Dorsolateral prefrontal cortex (tissue), 120 donors: ENCODE measurements at regions of chr1 and their contacts with region 1.

Region 1: DNA sequence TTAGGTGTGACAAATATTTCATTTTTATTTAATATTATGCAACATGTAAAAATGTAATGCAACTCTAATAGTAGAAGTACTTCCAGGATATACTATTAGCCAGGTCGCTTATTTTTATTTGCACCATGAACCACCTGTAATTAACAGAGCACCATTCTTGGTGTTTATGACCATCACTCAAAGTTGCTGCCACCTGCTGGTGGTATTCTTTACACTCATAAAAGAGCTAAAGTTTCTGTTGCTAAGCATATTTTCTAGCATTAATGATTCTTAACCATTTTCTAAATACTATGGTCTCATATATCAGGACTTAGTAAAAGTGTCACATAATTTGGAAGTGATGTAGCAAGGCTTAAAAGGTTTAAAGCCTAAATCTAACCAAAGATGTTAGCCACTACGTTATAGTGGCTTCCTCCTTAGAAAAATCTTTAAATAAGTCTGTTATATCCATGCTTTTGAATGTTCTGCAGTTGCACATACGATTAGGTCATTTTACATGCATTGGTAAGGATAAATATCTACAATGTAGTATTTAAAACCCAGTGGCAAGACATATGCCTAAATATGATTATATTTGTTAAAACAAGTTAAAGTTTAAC is 244.5 kb downstream of the NEGR1 start:
- DNase-seq: peak in 3 of 10 donors; percentile 23 to 36 (median 33)
- H3K4me3 ChIP-seq: no peak overlapping the region
- H3K27ac ChIP-seq: no peak overlapping the region
- H3K27me3 ChIP-seq: no peaks in the 10 kb centered on the region
- CTCF ChIP-seq: peak; percentile 45 to 80 (median 66)

Region 2: GRCh38 chr1:71587961-71588360 is 449.9 kb before region 1 on chr1:
- intact Hi-C with region 1: loop called in 1 of 2 experiments (anchors 10 kb)
- DNase-seq: no peak
- H3K4me3 ChIP-seq: no peak overlapping the region
- H3K27ac ChIP-seq: no peak overlapping the region
- H3K27me3 ChIP-seq: no peaks in the 10 kb centered on the region
- CTCF ChIP-seq: peak in 53 of 56 donors; percentile 20 to 74 (median 52)

Region 3: DNA sequence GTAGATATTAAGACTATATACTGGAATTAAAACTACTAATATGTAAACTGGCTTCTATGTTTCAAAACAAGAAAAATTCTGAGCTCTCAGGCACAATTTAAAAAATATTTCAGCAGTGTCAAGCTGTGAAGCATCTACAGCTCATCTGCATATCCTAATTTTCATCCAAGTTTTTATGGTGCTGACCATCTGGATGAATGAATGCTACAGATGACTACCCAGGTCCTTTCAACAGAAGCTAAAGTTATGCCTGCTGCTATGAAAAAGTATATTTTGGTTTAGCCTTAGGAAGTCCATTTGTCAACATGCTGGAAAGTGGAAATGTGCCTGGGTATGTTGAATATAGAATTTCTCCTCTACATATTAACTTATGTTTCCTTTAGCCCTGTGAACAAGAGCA is 37.6 kb after region 1 on chr1:
- intact Hi-C with region 1: no loop called
- DNase-seq: no peak
- H3K4me3 ChIP-seq: no peak overlapping the region
- H3K27ac ChIP-seq: no peak overlapping the region
- H3K27me3 ChIP-seq: no peaks in the 10 kb centered on the region
- CTCF ChIP-seq: no peak